ENCODE measurements at regions of chr2 and their contacts with region 1.

Region 1: GRCh38 chr2:31333527-31334183 is 80.9 kb downstream of the XDH start:
- DNase-seq: peak; percentile 60 to 81 (median 68)
- ATAC-seq: peak; percentile 80
- H3K4me3 ChIP-seq: no peak overlapping the region
- H3K4me3 Mint-ChIP-seq: no peak overlapping the region
- H3K27ac ChIP-seq: no peak overlapping the region
- H3K27ac Mint-ChIP-seq: no peak overlapping the region
- H3K4me1 ChIP-seq: no peaks in the 10 kb centered on the region
- H3K4me1 Mint-ChIP-seq: peaks cover 4% of the 10 kb centered on the region
- H3K27me3 ChIP-seq: peaks cover 0 to 2% of the 10 kb centered on the region in 2 experiments
- H3K27me3 Mint-ChIP-seq: peaks cover 5% of the 10 kb centered on the region
- CTCF ChIP-seq: peak; percentile 94

Region 2: DNA sequence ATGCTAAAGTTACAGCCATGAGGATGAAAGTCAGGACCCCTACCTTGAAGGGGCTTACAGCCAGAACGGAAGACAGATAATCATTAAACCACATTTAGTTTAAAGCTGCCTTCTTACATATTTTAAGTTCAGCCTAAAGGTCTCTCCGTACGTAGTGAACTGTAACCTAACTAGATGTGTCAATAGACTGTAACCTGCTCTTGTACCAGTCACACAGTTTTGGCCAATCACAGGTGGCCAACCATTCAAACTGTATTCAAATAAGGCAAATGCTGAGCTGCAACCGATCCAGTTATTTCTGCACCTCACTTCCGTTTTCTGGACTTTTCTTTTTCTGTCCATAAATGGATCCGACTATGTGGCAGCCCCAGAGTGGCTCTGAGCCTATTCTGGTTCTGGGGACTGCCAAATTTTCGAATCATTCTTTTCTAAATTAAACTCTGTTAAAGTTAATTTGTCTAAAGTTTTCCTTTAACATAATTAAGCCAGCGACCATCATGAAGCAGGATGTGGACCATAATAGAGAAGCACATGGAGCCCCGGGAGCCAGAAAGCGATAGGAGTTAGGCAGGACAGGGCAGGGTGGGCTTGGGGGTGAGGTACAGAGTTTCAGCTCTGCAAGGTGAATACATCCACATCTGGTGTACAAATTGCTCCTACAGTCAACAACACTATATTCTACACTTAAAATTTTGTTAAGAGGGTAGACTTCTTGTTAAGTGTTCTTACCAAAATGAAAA is 1235.2 kb before region 1 on chr2:
- CTCF ChIA-PET with region 1: no interaction called
- POLR2A ChIA-PET with region 1: no interaction called
- intact Hi-C with region 1: loop called in 1 of 2 experiments (anchors 10 kb)
- DNase-seq: no peak
- ATAC-seq: no peak
- H3K4me3 ChIP-seq: no peak overlapping the region
- H3K4me3 Mint-ChIP-seq: no peak overlapping the region
- H3K27ac ChIP-seq: no peak overlapping the region
- H3K27ac Mint-ChIP-seq: no peak overlapping the region
- H3K4me1 ChIP-seq: no peaks in the 10 kb centered on the region
- H3K4me1 Mint-ChIP-seq: no peaks in the 10 kb centered on the region
- H3K27me3 ChIP-seq: peaks cover 4 to 9% of the 10 kb centered on the region in 2 experiments
- H3K27me3 Mint-ChIP-seq: peaks cover 46% of the 10 kb centered on the region
- CTCF ChIP-seq: no peak

Region 3: GRCh38 chr2:30208452-30208851 is 1125.2 kb before region 1 on chr2:
- CTCF ChIA-PET with region 1: no interaction called
- POLR2A ChIA-PET with region 1: no interaction called
- intact Hi-C with region 1: loop called in 1 of 2 experiments (anchors 5 kb)
- DNase-seq: peak in 10 of 14 experiments; percentile 16 to 74 (median 33)
- ATAC-seq: peak; percentile 58
- H3K4me3 ChIP-seq: no peak overlapping the region
- H3K4me3 Mint-ChIP-seq: peak overlapping the region; percentile 42
- H3K27ac ChIP-seq: peak overlapping the region in 1 of 2 donors; percentile 9
- H3K27ac Mint-ChIP-seq: peak overlapping the region; percentile 82
- H3K4me1 ChIP-seq: peaks cover 21% of the 10 kb centered on the region
- H3K4me1 Mint-ChIP-seq: peaks cover 31% of the 10 kb centered on the region
- H3K27me3 ChIP-seq: no peaks in the 10 kb centered on the region
- H3K27me3 Mint-ChIP-seq: no peaks in the 10 kb centered on the region
- CTCF ChIP-seq: peak; percentile 96

Region 4: DNA sequence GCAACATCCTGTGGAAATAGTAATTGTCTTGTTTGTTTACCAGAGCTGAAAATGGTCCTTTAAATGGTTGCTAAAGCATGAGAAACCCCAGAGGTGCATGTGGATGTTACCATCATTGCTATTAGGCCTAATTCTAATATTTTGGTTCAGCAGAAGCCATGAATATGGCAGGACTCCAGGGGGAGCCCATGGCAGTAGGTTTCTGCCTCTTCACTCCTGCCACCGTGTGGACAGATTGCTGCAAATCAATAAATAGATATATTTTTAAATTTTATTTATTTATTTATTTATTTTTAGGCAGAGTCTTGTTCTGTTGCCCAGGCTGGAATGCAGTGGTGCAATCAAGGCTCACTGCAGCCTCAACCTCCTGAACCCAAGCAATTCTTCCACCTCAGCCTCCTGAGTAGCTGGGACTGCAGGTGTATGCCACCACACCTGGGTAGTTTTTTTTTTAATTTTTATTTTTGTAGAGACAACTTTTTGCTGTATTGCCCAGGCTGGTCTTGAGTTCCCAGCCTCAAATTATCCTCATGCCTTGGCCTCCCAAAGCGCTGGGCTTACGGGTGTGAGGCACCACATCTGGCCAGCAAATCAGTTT is 471.5 kb before region 1 on chr2:
- CTCF ChIA-PET with region 1: interaction called, 3 read pairs
- POLR2A ChIA-PET with region 1: no interaction called
- intact Hi-C with region 1: loop called (anchors 2 kb)
- DNase-seq: peak in 13 of 14 experiments; percentile 3 to 70 (median 29)
- ATAC-seq: no peak
- H3K4me3 ChIP-seq: no peak overlapping the region
- H3K4me3 Mint-ChIP-seq: no peak overlapping the region
- H3K27ac ChIP-seq: no peak overlapping the region
- H3K27ac Mint-ChIP-seq: no peak overlapping the region
- H3K4me1 ChIP-seq: peaks cover 3% of the 10 kb centered on the region
- H3K4me1 Mint-ChIP-seq: peaks cover 11% of the 10 kb centered on the region
- H3K27me3 ChIP-seq: peaks cover 0 to 1% of the 10 kb centered on the region in 2 experiments
- H3K27me3 Mint-ChIP-seq: peaks cover 4% of the 10 kb centered on the region
- CTCF ChIP-seq: peak; percentile 73

Region 5: DNA sequence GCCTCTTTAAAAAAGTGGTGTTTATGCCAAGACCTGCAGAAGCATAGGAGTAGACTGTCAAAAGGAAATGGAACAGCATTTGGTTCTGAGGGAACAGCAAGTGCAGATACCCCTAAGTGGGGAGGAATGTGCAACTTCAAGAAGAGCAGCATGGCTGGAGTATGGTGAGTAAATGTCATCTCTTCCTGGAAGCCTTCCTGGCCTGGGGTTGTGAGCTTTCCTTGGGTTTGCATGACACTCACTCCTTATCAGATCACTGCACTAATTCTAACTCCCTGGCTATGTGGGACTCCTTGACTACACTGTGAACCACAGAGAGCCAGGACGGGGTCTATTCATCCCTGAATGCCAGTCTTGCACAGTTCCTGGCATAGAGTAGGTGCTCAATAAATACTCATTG is 173.9 kb before region 1 on chr2:
- CTCF ChIA-PET with region 1: no interaction called
- POLR2A ChIA-PET with region 1: no interaction called
- intact Hi-C with region 1: no loop called
- DNase-seq: no peak
- ATAC-seq: no peak
- H3K4me3 ChIP-seq: no peak overlapping the region
- H3K4me3 Mint-ChIP-seq: no peak overlapping the region
- H3K27ac ChIP-seq: no peak overlapping the region
- H3K27ac Mint-ChIP-seq: no peak overlapping the region
- H3K4me1 ChIP-seq: no peaks in the 10 kb centered on the region
- H3K4me1 Mint-ChIP-seq: no peaks in the 10 kb centered on the region
- H3K27me3 ChIP-seq: peaks cover 0 to 6% of the 10 kb centered on the region in 2 experiments
- H3K27me3 Mint-ChIP-seq: no peaks in the 10 kb centered on the region
- CTCF ChIP-seq: no peak

Region 6: DNA sequence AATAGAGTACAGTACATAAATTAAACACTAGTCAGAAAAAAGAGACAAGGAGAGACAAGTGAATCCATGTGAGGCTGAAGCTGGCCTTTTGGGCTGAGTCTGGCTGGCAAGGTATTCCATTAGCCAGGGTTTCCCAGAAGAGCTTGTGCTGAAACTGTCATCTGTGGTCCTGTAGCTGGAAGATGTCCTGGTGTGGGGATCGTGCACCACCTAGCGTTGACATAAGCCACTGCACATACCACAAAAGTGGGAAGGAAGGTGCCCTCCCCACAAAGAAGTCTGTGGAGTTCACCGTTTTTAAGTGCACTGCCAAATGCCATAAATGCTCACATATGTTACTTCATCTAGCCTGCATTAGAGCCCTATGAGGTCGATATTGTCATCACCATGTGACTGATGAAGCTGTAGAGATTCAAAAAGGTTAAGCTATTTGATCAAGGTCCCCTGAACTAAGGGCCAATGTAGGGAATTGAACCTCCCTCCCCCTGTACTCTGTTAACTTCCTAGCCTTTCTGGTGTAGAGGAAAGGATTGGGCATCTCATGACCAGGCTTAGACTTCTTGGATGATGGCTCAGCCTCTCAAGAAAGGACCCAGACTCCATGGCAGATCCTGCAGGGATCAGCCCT is 163.5 kb before region 1 on chr2:
- CTCF ChIA-PET with region 1: no interaction called
- POLR2A ChIA-PET with region 1: no interaction called
- intact Hi-C with region 1: loop called in 1 of 2 experiments (anchors 2 kb)
- DNase-seq: peak in 12 of 14 experiments; percentile 9 to 73 (median 32)
- ATAC-seq: peak; percentile 54
- H3K4me3 ChIP-seq: no peak overlapping the region
- H3K4me3 Mint-ChIP-seq: no peak overlapping the region
- H3K27ac ChIP-seq: no peak overlapping the region
- H3K27ac Mint-ChIP-seq: no peak overlapping the region
- H3K4me1 ChIP-seq: no peaks in the 10 kb centered on the region
- H3K4me1 Mint-ChIP-seq: peaks cover 4% of the 10 kb centered on the region
- H3K27me3 ChIP-seq: no peaks in the 10 kb centered on the region
- H3K27me3 Mint-ChIP-seq: no peaks in the 10 kb centered on the region
- CTCF ChIP-seq: peak; percentile 73

Region 7: DNA sequence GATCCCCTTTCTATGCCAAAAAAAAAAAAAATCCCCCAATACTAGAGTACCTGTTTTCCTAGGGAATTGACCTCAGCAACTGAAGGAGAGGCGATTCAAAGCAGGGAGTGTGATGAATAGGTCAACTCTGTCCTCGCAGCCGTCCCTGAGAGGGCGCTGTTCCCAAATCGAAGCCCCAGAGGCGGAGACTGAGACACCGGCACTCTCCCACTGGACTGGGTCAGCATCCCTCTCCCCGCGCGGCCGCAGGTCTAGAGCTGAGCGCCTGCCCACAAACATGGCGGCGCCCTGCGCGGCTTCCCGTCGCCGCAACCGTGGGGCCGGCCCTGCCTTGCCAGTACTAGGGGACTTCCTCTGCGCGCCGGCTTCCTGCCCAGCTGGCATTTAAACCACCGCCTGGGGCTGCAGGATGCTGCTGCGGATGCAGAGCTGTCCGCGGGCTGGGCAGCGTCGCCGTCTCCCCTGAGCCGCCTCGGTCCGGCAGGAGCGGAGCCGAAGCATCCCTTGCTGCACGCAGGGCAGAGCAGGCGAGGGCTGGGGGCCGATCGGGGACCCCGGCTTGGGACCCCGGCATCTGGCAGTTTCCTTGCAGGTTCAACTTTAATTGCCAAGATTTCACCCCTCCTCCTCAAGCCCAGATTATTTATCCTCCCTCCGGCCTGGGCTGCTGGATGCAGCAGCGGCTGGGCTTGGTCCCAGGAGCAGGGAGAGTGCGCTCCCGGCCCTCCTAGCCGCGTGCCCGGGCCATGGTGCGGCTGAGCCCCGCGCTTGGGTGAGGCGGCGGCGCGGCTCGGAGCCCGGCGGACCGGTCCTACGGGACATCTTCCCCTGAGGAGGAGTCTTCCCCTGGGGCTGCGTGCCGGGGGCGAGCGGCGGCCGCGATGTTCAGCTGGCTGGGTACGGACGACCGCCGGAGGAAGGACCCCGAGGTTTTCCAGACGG is 99.6 kb before region 1 on chr2 and contains the start of gene EHD3:
- CTCF ChIA-PET with region 1: no interaction called
- POLR2A ChIA-PET with region 1: no interaction called
- intact Hi-C with region 1: loop called in 1 of 2 experiments (anchors 5 kb)
- DNase-seq: peak; percentile 51 to 85 (median 71)
- ATAC-seq: peak; percentile 97
- H3K4me3 ChIP-seq: peak within 1 kb of the TSS; percentile 73
- H3K4me3 Mint-ChIP-seq: peak within 1 kb of the TSS; percentile 86
- H3K27ac ChIP-seq: no peak within 1 kb of the TSS
- H3K27ac Mint-ChIP-seq: peak within 1 kb of the TSS; percentile 78
- H3K4me1 ChIP-seq: peaks cover 20% of the 10 kb centered on the region
- H3K4me1 Mint-ChIP-seq: peaks cover 31% of the 10 kb centered on the region
- H3K27me3 ChIP-seq: no peaks in the 10 kb centered on the region
- H3K27me3 Mint-ChIP-seq: peaks cover 9% of the 10 kb centered on the region
- CTCF ChIP-seq: no peak
- total RNA-seq, gene EHD3: 1.4 to 1.7 TPM

Region 8: GRCh38 chr2:31517442-31518203 is 184.0 kb after region 1 on chr2:
- CTCF ChIA-PET with region 1: no interaction called
- POLR2A ChIA-PET with region 1: no interaction called
- intact Hi-C with region 1: no loop called
- DNase-seq: no peak
- ATAC-seq: no peak
- H3K4me3 ChIP-seq: no peak overlapping the region
- H3K4me3 Mint-ChIP-seq: no peak overlapping the region
- H3K27ac ChIP-seq: no peak overlapping the region
- H3K27ac Mint-ChIP-seq: no peak overlapping the region
- H3K4me1 ChIP-seq: no peaks in the 10 kb centered on the region
- H3K4me1 Mint-ChIP-seq: no peaks in the 10 kb centered on the region
- H3K27me3 ChIP-seq: no peaks in the 10 kb centered on the region
- H3K27me3 Mint-ChIP-seq: peaks cover 13% of the 10 kb centered on the region
- CTCF ChIP-seq: no peak

Measured in CD4-positive, alpha-beta T cell (primary cell).